ENCODE measurements at regions of chr16 and their contacts with region 1.

Region 1: DNA sequence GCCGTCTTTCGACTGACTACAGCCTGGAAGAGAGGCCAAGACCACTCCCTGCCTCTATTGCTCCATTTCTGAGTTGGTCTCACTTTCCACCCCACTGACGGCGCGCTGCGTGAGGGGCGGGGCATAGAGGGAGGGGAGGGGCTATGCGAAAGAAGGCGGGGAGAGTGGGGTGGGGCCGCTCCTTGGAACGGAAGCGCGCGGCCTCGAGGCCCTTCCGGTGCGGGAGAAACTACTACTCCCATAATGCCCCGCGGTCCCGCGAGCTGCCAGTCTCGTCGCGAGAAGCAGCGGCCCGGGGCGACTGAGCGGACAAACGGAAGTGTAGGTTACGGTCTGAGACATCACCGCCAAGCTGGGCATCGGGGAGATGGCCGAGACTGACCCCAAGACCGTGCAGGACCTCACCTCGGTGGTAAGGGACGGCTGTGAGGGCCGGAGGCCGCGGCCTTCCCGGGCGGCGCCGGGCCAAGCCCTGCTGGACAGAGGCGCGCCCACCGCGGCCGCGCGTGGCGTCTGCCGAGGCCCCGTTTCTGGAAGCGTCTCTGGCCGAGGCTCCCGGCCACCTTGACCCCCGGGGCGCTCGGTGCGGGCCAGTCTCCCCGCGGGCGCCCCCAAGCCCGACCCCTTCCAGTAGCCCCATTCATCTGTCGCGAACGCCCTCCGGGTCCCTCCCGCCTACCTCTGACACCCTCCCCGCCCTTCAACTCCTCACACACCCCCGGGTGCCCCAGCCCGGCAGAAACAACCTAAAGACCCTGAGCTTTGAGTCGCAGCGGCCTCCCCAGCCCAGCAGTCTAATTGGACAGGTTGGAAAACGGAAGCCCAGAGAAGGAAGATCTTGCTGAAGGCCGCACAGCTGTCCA is at the start of gene HSBP1:
- DNase-seq: peak; percentile 93
- ATAC-seq: peak; percentile 94
- H3K4me3 ChIP-seq: peak within 1 kb of the TSS; percentile 62 to 93 (median 83)
- H3K4me3 Mint-ChIP-seq: peak within 1 kb of the TSS; percentile 97
- H3K27ac ChIP-seq: peak within 1 kb of the TSS; percentile 78 to 91
- H3K27ac Mint-ChIP-seq: peak within 1 kb of the TSS; percentile 98
- H3K4me1 ChIP-seq: peaks cover 50 to 55% of the 10 kb centered on the region in 2 donors
- H3K4me1 Mint-ChIP-seq: peaks cover 62% of the 10 kb centered on the region
- H3K27me3 ChIP-seq: no peaks in the 10 kb centered on the region
- H3K27me3 Mint-ChIP-seq: no peaks in the 10 kb centered on the region
- CTCF ChIP-seq: no peak
- total RNA-seq, gene HSBP1: 39.6 and 45.4 TPM in 2 replicates

Region 2: GRCh38 chr16:83769397-83770008 is 38.4 kb before region 1 on chr16:
- CTCF ChIA-PET with region 1: no interaction called
- POLR2A ChIA-PET with region 1: no interaction called
- intact Hi-C with region 1: loop called (anchors 2 kb)
- DNase-seq: peak; percentile 70
- ATAC-seq: peak; percentile 80
- H3K4me3 ChIP-seq: no peak overlapping the region
- H3K4me3 Mint-ChIP-seq: peak overlapping the region; percentile 61
- H3K27ac ChIP-seq: peak overlapping the region; percentile 52 to 65
- H3K27ac Mint-ChIP-seq: peak overlapping the region; percentile 79
- H3K4me1 ChIP-seq: peaks cover 23 to 27% of the 10 kb centered on the region in 2 donors
- H3K4me1 Mint-ChIP-seq: peaks cover 19% of the 10 kb centered on the region
- H3K27me3 ChIP-seq: peaks cover 0 to 2% (median 0%) of the 10 kb centered on the region in 4 experiments
- H3K27me3 Mint-ChIP-seq: no peaks in the 10 kb centered on the region
- CTCF ChIP-seq: no peak

Region 3: GRCh38 chr16:83842756-83843507 is 35.0 kb after region 1 on chr16:
- CTCF ChIA-PET with region 1: no interaction called
- POLR2A ChIA-PET with region 1: interaction called, 4 read pairs
- intact Hi-C with region 1: loop called (anchors 1 kb)
- DNase-seq: peak; percentile 79
- ATAC-seq: peak; percentile 89
- H3K4me3 ChIP-seq: peak overlapping the region in 3 of 5 experiments; percentile 15 to 47 (median 21)
- H3K4me3 Mint-ChIP-seq: peak overlapping the region; percentile 71
- H3K27ac ChIP-seq: peak overlapping the region; percentile 63 to 65
- H3K27ac Mint-ChIP-seq: peak overlapping the region; percentile 90
- H3K4me1 ChIP-seq: peaks cover 42 to 48% of the 10 kb centered on the region in 2 donors
- H3K4me1 Mint-ChIP-seq: peaks cover 47% of the 10 kb centered on the region
- H3K27me3 ChIP-seq: no peaks in the 10 kb centered on the region
- H3K27me3 Mint-ChIP-seq: peaks cover 3% of the 10 kb centered on the region
- CTCF ChIP-seq: no peak

Region 4: DNA sequence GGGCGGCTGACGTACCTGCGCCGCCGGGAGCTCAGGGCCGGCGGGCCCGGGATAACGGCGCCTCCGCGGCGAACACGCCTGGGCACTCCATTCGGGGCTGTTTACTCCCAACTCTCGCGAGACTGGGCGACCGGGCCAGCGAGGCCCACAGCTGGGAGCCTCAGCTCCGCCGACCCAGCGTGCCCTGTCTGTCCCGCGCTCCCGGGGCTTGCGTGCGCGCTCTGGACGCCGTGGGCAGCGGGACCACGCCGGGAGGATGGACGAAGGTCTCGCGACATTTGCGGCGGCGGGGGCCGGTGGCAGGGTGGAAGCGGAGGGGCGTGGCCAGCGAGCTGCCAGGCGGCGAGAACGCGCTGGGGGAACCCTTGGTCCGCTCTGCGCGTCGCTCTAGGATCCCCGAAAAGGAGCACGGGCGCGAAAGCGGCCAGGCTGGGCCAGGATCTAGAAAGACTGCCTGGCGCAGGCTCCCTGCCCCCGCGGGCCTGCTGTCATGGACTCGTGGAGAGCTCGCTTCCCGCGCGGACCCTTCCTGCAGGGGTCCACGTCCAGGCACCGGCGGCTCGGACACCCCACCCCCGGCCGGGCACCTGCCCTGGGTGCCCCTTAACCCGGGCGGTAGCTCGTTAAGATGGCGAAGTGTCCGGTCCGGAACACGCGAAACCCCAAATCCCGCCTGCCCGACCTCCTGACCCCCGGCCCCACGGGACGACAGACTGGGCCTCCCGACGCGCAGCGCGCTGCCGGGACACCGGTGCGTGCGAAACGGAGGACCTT is 309.0 kb after region 1 on chr16 and contains the start of gene MBTPS1:
- CTCF ChIA-PET with region 1: no interaction called
- POLR2A ChIA-PET with region 1: no interaction called
- intact Hi-C with region 1: loop called (anchors 1 kb)
- DNase-seq: peak; percentile 99
- ATAC-seq: peak; percentile 87
- H3K4me3 ChIP-seq: peak within 1 kb of the TSS; percentile 83 to 97 (median 94)
- H3K4me3 Mint-ChIP-seq: peak within 1 kb of the TSS; percentile 97
- H3K27ac ChIP-seq: peak within 1 kb of the TSS; percentile 75 to 94
- H3K27ac Mint-ChIP-seq: peak within 1 kb of the TSS; percentile 96
- H3K4me1 ChIP-seq: peaks cover 16 to 20% of the 10 kb centered on the region in 2 donors
- H3K4me1 Mint-ChIP-seq: peaks cover 20% of the 10 kb centered on the region
- H3K27me3 ChIP-seq: no peaks in the 10 kb centered on the region
- H3K27me3 Mint-ChIP-seq: no peaks in the 10 kb centered on the region
- CTCF ChIP-seq: peak; percentile 14
- total RNA-seq, gene MBTPS1: 119 and 120 TPM in 2 replicates

Region 5: GRCh38 chr16:84186685-84187437 is 378.9 kb after region 1 on chr16 and contains the start of gene TAF1C:
- CTCF ChIA-PET with region 1: no interaction called
- POLR2A ChIA-PET with region 1: no interaction called
- intact Hi-C with region 1: loop called (anchors 2 kb)
- DNase-seq: peak; percentile 96
- ATAC-seq: peak; percentile 99
- H3K4me3 ChIP-seq: peak within 1 kb of the TSS; percentile 70 to 98 (median 88)
- H3K4me3 Mint-ChIP-seq: peak within 1 kb of the TSS; percentile 96
- H3K27ac ChIP-seq: peak within 1 kb of the TSS; percentile 26 to 83
- H3K27ac Mint-ChIP-seq: peak within 1 kb of the TSS; percentile 88
- H3K4me1 ChIP-seq: peaks cover 7 to 10% of the 10 kb centered on the region in 2 donors
- H3K4me1 Mint-ChIP-seq: peaks cover 22% of the 10 kb centered on the region
- H3K27me3 ChIP-seq: no peaks in the 10 kb centered on the region
- H3K27me3 Mint-ChIP-seq: no peaks in the 10 kb centered on the region
- CTCF ChIP-seq: peak; percentile 88
- total RNA-seq, gene TAF1C: 110 and 115 TPM in 2 replicates

Region 6: GRCh38 chr16:85027349-85027957 is 1219.5 kb after region 1 on chr16 and contains the start of gene KIAA0513:
- CTCF ChIA-PET with region 1: no interaction called
- POLR2A ChIA-PET with region 1: no interaction called
- intact Hi-C with region 1: loop called (anchors 5 kb)
- DNase-seq: peak; percentile 96
- ATAC-seq: peak; percentile 92
- H3K4me3 ChIP-seq: peak within 1 kb of the TSS; percentile 57 to 84 (median 80)
- H3K4me3 Mint-ChIP-seq: peak within 1 kb of the TSS; percentile 94
- H3K27ac ChIP-seq: peak within 1 kb of the TSS; percentile 52 to 75
- H3K27ac Mint-ChIP-seq: peak within 1 kb of the TSS; percentile 89
- H3K4me1 ChIP-seq: peaks cover 28 to 33% of the 10 kb centered on the region in 2 donors
- H3K4me1 Mint-ChIP-seq: peaks cover 42% of the 10 kb centered on the region
- H3K27me3 ChIP-seq: peaks cover 0 to 6% (median 2%) of the 10 kb centered on the region in 4 experiments
- H3K27me3 Mint-ChIP-seq: peaks cover 13% of the 10 kb centered on the region
- CTCF ChIP-seq: no peak
- total RNA-seq, gene KIAA0513: 1.1 and 1.7 TPM in 2 replicates